K562 (cell line): ENCODE measurements at regions of chr15 and their contacts with region 1.

Region 1: GRCh38 chr15:40893733-40894688 is at the start of gene VPS18:
- DNase-seq: peak; percentile 94 to 98 (median 94)
- ATAC-seq: peak; percentile 96
- H3K4me3 ChIP-seq: peak within 1 kb of the TSS; percentile 92
- H3K27ac ChIP-seq: peak within 1 kb of the TSS; percentile 76
- H3K4me1 ChIP-seq: peaks cover 8 to 16% of the 10 kb centered on the region in 2 experiments; a peak in 4 of 5 replicates
- H3K27me3 ChIP-seq: no peaks in the 10 kb centered on the region
- CTCF ChIP-seq: peak; percentile 89 to 96 (median 95)
- EP300 ChIP-seq: 0 out of 2 replicates have a peak, but pooled peaks have one; percentile 15
- POLR2A ChIP-seq: peak; percentile 64
- RAD21 ChIP-seq: peak; percentile 91 to 96
- polyA plus RNA-seq, gene VPS18: 0.73 to 0.88 TPM

Region 2: DNA sequence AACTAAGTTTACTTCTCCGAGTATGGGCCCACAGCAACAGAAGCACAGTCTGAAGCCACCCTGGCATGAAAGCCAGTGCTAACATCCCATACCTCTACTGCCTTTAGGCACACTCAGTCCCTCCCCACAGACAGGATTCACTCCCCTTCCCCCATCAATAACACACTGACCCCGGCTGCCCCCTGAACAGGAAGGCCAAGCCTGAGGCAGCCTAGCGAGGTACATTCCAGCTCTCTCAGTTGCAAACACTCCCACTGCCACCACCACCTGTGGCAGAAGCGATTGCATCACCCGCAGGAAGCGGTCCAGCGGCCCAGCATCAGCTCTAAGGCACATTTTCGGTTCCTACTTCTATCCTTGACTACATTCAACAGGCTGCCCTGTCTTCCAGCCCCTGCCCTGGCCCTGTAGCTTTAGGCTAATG is 778.3 kb before region 1 on chr15:
- CTCF ChIA-PET with region 1: no interaction called
- POLR2A ChIA-PET with region 1: no interaction called
- in situ Hi-C with region 1: no loop called
- intact Hi-C with region 1: no loop called
- DNase-seq: no peak
- ATAC-seq: peak; percentile 64
- H3K4me3 ChIP-seq: no peak overlapping the region
- H3K27ac ChIP-seq: no peak overlapping the region
- H3K4me1 ChIP-seq: peaks cover 4 to 6% of the 10 kb centered on the region in 2 experiments; a peak in 4 of 5 replicates
- H3K27me3 ChIP-seq: peaks cover 3% of the 10 kb centered on the region in 2 experiments; a peak in 2 of 5 replicates
- CTCF ChIP-seq: no peak
- EP300 ChIP-seq: no peak
- POLR2A ChIP-seq: no peak
- RAD21 ChIP-seq: peak in 1 of 2 experiments; percentile 12; a peak in 2 of 4 replicates

Region 3: DNA sequence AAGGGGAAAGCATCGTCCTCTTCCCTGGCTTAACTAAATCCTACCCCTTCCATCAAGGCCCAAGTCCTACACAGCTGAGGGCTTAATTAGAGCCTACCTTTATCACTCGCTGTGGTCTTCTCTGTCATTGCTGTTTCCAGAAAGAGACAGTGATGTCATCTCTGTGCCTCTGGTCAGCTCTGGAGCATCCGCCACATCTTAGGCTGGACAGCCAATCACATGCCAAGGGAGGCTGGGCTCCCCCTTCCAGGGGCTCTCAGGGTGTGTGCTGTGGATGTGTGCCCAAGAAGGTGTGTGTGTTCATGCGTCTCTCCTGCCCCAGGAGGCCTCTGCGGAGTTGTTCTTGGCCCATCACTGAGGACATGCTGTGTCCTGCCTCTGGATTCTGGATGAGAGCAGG is 380.4 kb before region 1 on chr15:
- CTCF ChIA-PET with region 1: interaction called, 5 read pairs
- POLR2A ChIA-PET with region 1: no interaction called
- in situ Hi-C with region 1: no loop called
- intact Hi-C with region 1: loop called (anchors 2 kb)
- DNase-seq: peak in 1 of 4 experiments; percentile 34
- ATAC-seq: no peak
- H3K4me3 ChIP-seq: no peak overlapping the region
- H3K27ac ChIP-seq: no peak overlapping the region
- H3K4me1 ChIP-seq: peaks cover 13 to 21% of the 10 kb centered on the region in 2 experiments
- H3K27me3 ChIP-seq: no peaks in the 10 kb centered on the region
- CTCF ChIP-seq: no peak
- EP300 ChIP-seq: no peak
- POLR2A ChIP-seq: no peak
- RAD21 ChIP-seq: no peak

Region 4: DNA sequence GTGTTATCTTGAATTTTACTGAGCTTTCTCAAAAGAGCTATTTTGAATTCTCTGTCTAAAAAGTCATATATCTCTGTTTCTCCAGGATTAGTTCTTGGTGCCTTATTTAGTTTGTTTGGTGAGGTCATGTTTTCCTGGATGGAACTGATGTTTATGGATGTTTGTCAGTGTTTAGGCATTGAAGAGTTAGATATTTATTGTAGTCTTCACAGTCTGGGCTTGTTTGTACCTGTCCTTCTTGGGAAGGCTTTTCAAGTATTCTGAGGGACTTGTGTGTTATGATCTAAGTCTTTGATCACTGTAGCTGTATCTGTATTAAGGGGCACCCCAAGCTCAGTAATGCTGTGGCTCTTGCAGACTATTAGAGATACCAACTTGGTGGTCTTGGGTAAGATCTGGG is 209.6 kb before region 1 on chr15:
- CTCF ChIA-PET with region 1: no interaction called
- POLR2A ChIA-PET with region 1: no interaction called
- in situ Hi-C with region 1: loop called (anchors 10 kb)
- intact Hi-C with region 1: loop called (anchors 5 kb)
- DNase-seq: no peak
- ATAC-seq: no peak
- H3K4me3 ChIP-seq: no peak overlapping the region
- H3K27ac ChIP-seq: no peak overlapping the region
- H3K4me1 ChIP-seq: no peaks in the 10 kb centered on the region
- H3K27me3 ChIP-seq: no peaks in the 10 kb centered on the region
- CTCF ChIP-seq: no peak
- EP300 ChIP-seq: no peak
- POLR2A ChIP-seq: no peak
- RAD21 ChIP-seq: no peak

Region 5: DNA sequence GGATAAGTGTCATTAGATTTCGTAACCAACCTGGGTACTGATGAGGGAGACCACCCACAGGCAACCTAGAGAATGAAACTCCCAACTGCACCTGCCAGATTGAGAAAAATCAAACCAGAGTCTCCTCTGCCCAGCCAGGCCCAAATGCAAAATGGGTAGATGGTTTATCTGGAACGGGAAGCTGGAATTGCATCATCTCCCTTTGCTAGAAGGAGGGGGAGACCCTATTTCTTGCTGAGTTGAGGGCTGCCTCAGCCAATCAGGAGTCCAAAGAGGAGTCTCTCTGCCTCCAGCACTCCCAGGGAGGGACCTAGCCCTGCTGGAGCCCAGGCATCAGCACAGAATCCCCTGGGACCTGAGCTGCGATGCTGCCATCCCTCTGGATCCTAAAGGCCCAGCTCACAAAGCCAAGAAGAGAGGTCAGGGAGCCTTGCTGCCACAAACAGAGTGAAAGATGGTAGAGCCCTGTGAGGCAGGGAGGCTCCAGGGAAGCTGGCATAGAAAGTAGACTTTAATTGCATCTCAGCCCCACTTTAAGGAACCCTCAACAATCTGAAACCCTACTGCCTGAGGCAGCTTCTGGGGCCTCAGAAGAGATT is 147.0 kb before region 1 on chr15:
- CTCF ChIA-PET with region 1: no interaction called
- POLR2A ChIA-PET with region 1: interaction called, 3 read pairs
- in situ Hi-C with region 1: no loop called
- intact Hi-C with region 1: loop called (anchors 2 kb)
- DNase-seq: peak in 1 of 4 experiments; percentile 16
- ATAC-seq: peak; percentile 72
- H3K4me3 ChIP-seq: no peak overlapping the region
- H3K27ac ChIP-seq: peak overlapping the region; percentile 45; the same call in 2 of the 3 replicates
- H3K4me1 ChIP-seq: peaks cover 51 to 53% of the 10 kb centered on the region in 2 experiments
- H3K27me3 ChIP-seq: no peaks in the 10 kb centered on the region
- CTCF ChIP-seq: no peak
- EP300 ChIP-seq: peak; percentile 9; the same call in 1 of the 2 replicates
- POLR2A ChIP-seq: no peak
- RAD21 ChIP-seq: no peak

Region 6: DNA sequence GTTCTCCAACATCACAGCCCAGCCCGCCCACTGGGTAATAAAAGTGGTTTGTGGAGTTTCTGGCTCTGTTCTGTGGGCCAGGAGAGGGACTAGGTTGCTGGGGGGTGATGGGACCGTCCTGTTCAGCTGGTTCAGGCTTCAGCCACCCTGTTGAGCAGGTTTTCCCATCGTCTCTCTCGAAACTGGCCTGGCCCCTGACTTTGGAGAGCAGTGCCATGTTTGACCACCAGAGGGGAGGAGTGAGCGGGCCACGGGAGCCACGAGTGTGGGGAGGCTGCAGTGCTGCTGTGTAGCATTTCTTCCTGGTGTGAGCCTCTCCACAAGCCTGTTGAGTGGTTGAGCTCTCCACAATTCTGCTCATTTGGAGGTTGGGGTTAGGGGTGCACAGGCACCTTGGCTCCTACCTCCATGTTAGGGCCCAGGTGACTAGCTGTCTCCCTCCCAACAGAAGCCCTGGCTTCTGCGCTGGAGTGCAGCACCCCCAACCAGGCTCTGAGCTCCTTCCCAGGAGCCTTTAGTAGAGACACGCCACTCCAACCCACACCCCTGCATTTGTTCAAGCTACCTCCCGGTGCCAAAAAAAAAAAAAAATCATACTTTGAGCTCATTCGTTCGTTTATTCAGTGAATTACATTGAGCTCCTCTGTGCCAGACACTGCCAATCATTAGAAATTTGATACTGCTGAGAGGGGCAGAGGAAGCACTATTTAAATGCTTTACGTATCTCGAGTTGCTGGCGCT is 36.2 kb before region 1 on chr15:
- CTCF ChIA-PET with region 1: interaction called, 75 read pairs
- POLR2A ChIA-PET with region 1: interaction called, 14 read pairs
- in situ Hi-C with region 1: loop called (anchors 5 kb)
- intact Hi-C with region 1: loop called (anchors 1 kb)
- DNase-seq: peak; percentile 83 to 89 (median 84)
- ATAC-seq: peak; percentile 92
- H3K4me3 ChIP-seq: no peak overlapping the region
- H3K27ac ChIP-seq: no peak overlapping the region
- H3K4me1 ChIP-seq: peaks cover 16 to 25% of the 10 kb centered on the region in 2 experiments; a peak in 4 of 5 replicates
- H3K27me3 ChIP-seq: no peaks in the 10 kb centered on the region; a peak in 1 of 5 replicates
- CTCF ChIP-seq: peak; percentile 94 to 98 (median 95)
- EP300 ChIP-seq: no peak
- POLR2A ChIP-seq: no peak
- RAD21 ChIP-seq: peak; percentile 74 to 86

Region 7: DNA sequence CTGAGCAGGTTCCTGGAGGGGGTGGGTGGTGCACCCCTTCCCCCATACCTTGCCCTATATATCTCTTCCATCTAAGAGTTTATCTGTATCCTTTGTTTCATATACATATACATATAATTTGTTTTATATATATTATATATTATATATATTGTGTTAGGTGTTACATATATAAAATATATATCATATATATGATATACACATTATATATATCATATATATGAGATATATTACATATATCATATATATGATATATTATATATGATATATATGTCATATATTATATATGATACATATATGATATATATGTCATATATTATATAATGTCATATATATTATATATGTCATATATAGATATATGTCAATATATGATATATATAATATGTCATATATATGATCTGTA is 305.5 kb after region 1 on chr15:
- CTCF ChIA-PET with region 1: no interaction called
- POLR2A ChIA-PET with region 1: no interaction called
- in situ Hi-C with region 1: no loop called
- intact Hi-C with region 1: no loop called
- DNase-seq: no peak
- ATAC-seq: no peak
- H3K4me3 ChIP-seq: no peak overlapping the region
- H3K27ac ChIP-seq: no peak overlapping the region
- H3K4me1 ChIP-seq: no peaks in the 10 kb centered on the region; a peak in 1 of 5 replicates
- H3K27me3 ChIP-seq: no peaks in the 10 kb centered on the region
- CTCF ChIP-seq: no peak
- EP300 ChIP-seq: no peak
- POLR2A ChIP-seq: no peak
- RAD21 ChIP-seq: no peak